ENCODE measurements at regions of chr10 and their contacts with region 1.

Region 1: DNA sequence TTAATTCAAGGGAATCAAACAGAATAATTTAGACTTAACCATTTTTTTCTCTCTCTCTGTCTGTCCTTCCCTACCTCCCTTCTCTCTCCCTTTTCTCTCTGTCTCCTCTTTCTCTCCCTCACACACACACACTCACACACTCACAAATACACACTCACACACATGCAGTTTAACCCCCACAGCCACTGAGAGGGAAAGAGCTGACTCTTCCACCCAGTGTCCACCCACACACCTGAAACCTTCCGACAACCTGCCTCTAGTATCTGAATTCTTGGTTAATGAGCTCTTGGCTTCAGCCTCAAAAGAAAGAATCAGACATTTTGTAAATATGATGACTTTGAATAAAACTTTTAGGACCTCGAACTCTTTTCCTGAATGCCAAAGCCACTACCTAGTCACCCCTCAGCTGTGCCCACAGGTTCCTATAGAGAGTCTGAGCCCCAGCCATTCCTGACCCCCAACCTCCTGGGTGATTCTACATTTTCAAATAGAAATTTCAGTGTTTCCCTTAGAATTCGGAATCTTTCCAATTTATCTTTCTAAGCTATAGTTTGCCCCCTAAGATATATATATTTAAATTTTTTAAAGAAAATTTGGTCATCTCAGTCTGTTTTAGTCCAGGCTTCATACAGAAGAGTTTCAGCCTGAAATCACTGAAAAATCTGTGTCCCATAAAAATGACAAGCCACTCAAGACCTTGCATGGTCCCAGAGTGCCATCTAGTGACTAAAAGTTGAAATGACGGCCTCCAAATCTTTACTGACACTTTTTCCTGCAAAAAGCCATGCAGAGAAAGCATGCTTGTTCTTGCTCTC is 202.8 kb downstream of the IPMK start:
- DNase-seq: peak; percentile 45
- ATAC-seq: peak; percentile 65; the same call in 1 of the 2 replicates
- H3K4me3 ChIP-seq: no peak overlapping the region
- H3K27ac ChIP-seq: no peak overlapping the region
- H3K4me1 ChIP-seq: no peaks in the 10 kb centered on the region
- H3K27me3 ChIP-seq: 0 out of 2 replicates have a peak, but pooled peaks cover 2% of the 10 kb centered on the region
- CTCF ChIP-seq: peak; percentile 91

Region 2: DNA sequence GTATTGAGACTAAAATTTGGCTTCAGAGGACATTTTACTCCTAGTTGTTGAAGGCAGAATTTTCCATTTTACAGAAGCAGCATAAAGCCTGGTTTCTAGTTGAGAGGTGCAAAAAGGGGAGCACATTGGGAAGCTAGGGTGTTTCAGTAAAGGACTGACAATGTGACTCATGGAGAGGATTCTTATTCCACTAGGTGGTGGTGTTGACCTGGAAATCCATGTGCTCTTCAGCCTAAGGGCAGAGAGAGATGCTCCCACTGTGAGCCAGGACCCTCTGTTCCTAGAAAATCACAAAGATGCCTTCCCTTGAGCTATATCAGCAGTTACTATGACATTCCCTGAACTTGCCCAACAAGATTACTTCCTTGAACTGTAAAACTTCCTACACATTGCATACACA is 485.0 kb before region 1 on chr10:
- CTCF ChIA-PET with region 1: no interaction called
- POLR2A ChIA-PET with region 1: no interaction called
- in situ Hi-C with region 1: no loop called
- intact Hi-C with region 1: loop called (anchors 5 kb)
- DNase-seq: peak; percentile 12
- ATAC-seq: peak; percentile 68; the same call in 1 of the 2 replicates
- H3K4me3 ChIP-seq: no peak overlapping the region
- H3K27ac ChIP-seq: no peak overlapping the region
- H3K4me1 ChIP-seq: no peaks in the 10 kb centered on the region
- H3K27me3 ChIP-seq: no peaks in the 10 kb centered on the region
- CTCF ChIP-seq: peak; percentile 50

Region 3: GRCh38 chr10:57657164-57657765 is 407.7 kb before region 1 on chr10:
- CTCF ChIA-PET with region 1: no interaction called
- POLR2A ChIA-PET with region 1: no interaction called
- in situ Hi-C with region 1: no loop called
- intact Hi-C with region 1: loop called (anchors 10 kb)
- DNase-seq: peak; percentile 48
- ATAC-seq: peak; percentile 89
- H3K4me3 ChIP-seq: no peak overlapping the region
- H3K27ac ChIP-seq: no peak overlapping the region
- H3K4me1 ChIP-seq: no peaks in the 10 kb centered on the region
- H3K27me3 ChIP-seq: no peaks in the 10 kb centered on the region
- CTCF ChIP-seq: peak; percentile 94

Region 4: GRCh38 chr10:57716886-57717285 is 348.0 kb before region 1 on chr10:
- CTCF ChIA-PET with region 1: no interaction called
- POLR2A ChIA-PET with region 1: no interaction called
- in situ Hi-C with region 1: no loop called
- intact Hi-C with region 1: loop called (anchors 10 kb)
- DNase-seq: no peak
- ATAC-seq: no peak
- H3K4me3 ChIP-seq: no peak overlapping the region
- H3K27ac ChIP-seq: no peak overlapping the region
- H3K4me1 ChIP-seq: no peaks in the 10 kb centered on the region
- H3K27me3 ChIP-seq: no peaks in the 10 kb centered on the region
- CTCF ChIP-seq: peak; percentile 36; the same call in 1 of the 2 replicates

Region 5: DNA sequence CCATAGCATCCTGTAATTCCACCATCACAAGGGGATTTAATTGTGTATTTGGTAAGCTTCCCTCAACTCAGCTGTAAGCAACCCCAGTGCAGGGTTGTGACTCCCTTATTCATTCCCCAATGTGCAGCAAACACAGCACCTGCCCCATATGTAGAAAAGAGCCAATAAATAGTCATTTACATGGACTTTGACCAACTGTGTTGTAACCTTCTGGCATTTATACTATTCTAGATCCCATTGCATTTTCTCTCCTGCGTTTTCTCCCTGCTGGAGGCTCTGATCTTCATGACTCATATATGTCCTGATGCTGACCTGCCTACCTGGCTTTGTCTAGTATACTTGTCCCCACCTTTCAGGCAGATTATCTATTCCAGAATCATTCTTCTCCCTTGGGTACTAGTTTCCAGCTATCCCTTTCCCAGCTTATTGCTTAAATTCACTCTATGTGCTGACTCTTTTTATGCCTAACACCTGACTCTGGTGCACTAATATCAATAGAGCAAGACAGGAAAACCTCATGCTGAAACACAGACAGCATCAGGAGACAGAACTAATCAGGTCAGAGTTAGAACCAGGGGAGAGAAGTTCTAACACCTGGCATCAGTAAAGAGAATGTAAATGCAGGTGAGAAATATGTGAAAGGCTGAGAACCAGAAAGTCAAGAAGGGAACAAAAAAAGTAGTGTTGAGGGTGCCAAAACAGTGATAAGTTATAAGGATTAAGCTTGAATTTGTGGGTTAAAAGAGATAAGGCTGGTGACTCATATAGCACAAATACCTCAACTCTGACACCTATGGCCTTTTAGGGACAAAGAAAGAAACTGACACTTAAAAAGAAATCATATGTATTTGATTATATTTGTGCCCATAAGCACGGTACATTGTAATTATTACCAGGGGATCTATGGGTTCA is 199.9 kb before region 1 on chr10:
- CTCF ChIA-PET with region 1: no interaction called
- POLR2A ChIA-PET with region 1: no interaction called
- in situ Hi-C with region 1: no loop called
- intact Hi-C with region 1: loop called (anchors 10 kb)
- DNase-seq: no peak
- ATAC-seq: no peak
- H3K4me3 ChIP-seq: no peak overlapping the region
- H3K27ac ChIP-seq: no peak overlapping the region
- H3K4me1 ChIP-seq: no peaks in the 10 kb centered on the region
- H3K27me3 ChIP-seq: no peaks in the 10 kb centered on the region
- CTCF ChIP-seq: no peak

Region 6: GRCh38 chr10:57992321-57993077 is 72.4 kb before region 1 on chr10:
- CTCF ChIA-PET with region 1: no interaction called
- POLR2A ChIA-PET with region 1: no interaction called
- in situ Hi-C with region 1: no loop called
- intact Hi-C with region 1: no loop called
- DNase-seq: no peak
- ATAC-seq: no peak
- H3K4me3 ChIP-seq: no peak overlapping the region
- H3K27ac ChIP-seq: no peak overlapping the region
- H3K4me1 ChIP-seq: no peaks in the 10 kb centered on the region; the same call in 1 of the 2 replicates
- H3K27me3 ChIP-seq: no peaks in the 10 kb centered on the region
- CTCF ChIP-seq: no peak

Region 7: DNA sequence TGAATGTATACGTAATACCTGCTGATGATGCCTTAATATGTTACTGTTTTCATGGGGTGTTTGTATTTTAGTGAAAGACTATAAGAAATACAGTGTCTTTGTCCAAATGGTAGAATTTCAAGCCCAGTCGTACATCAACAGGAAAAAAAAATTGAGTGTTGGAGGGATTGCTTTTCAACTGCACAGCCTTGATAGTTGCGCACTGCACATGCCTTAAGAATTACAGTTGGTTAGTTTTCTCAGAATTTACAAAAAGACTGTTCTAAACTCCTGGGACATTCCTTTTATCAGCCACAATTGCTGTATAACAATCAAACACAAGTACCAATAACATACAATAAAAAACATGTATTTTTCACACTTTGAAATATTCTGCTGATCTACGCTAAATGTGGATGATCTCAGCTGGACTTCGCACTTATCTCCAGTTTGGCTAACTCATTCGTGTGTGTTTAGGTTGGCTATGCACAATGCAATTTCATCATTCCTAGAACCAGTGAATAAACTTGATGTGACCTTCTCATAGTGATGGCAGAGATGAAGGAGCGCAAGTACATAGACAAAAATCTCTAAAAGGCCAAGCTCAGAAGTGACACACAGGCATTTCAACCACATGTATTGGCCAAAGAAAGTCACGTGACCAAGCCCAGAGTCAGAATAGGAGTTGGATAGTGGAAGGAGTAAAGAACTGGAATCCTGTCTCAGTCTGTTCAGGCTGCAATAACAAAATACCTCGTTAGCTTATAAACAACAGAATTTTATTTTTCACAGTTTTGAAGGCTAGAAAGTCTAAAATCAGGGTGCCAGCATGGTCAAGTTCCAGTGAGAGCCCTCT is 50.5 kb after region 1 on chr10:
- CTCF ChIA-PET with region 1: no interaction called
- POLR2A ChIA-PET with region 1: no interaction called
- in situ Hi-C with region 1: no loop called
- intact Hi-C with region 1: no loop called
- DNase-seq: no peak
- ATAC-seq: no peak
- H3K4me3 ChIP-seq: no peak overlapping the region
- H3K27ac ChIP-seq: no peak overlapping the region
- H3K4me1 ChIP-seq: no peaks in the 10 kb centered on the region
- H3K27me3 ChIP-seq: no peaks in the 10 kb centered on the region
- CTCF ChIP-seq: no peak

Measured in Panc1 (cell line).